K562 (cell line): ENCODE measurements at regions of chr4 and their contacts with region 1.

Region 1: DNA sequence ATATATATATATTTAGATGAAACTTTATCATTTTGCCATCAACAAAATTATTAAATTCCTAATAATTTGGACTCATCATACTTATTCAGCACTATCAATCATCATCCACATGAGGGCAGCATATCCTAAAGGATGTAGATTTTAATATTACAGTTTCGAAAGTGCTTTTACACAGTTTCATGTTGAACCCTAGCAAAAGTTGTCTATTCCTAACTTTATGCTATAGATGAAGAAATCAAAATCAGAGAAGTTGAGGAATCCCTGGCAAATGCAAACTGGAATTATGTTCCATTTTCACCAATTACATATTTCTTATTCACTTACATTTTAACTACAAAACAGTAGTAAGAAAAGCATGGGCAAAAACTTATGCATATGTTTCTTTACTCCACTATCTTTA is 36.6 kb upstream of the UGT2A1 start:
- DNase-seq: peak; percentile 4 to 11 (median 10)
- ATAC-seq: no peak
- H3K4me3 ChIP-seq: no peak overlapping the region
- H3K27ac ChIP-seq: no peak overlapping the region
- H3K4me1 ChIP-seq: no peaks in the 10 kb centered on the region
- H3K27me3 ChIP-seq: no peaks in the 10 kb centered on the region
- CTCF ChIP-seq: peak in 1 of 3 experiments; percentile 43; a peak in 2 of 6 replicates
- EP300 ChIP-seq: no peak
- POLR2A ChIP-seq: no peak
- RAD21 ChIP-seq: peak; percentile 72 to 75

Region 2: DNA sequence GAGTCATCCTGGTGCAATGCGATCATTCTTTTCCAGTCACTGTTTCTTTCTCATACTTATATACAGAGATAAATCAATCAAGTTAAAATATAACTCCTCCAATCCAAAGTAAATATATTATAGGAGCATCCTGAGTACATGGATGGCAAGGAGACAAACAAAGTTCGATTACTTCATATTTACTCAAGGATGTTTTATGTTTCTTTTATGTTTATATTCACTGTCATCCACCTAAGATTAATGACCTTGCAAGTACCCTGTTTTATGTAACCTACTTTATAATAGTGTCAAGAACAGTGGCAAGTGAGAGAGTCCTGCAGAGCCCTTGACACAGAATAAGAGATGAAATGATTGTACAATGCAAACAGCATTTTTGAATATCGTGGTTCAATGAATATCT is 474.9 kb before region 1 on chr4 and contains the start of gene UGT2B11:
- CTCF ChIA-PET with region 1: no interaction called
- POLR2A ChIA-PET with region 1: no interaction called
- in situ Hi-C with region 1: no loop called
- intact Hi-C with region 1: no loop called
- DNase-seq: no peak
- ATAC-seq: no peak
- H3K4me3 ChIP-seq: no peak within 1 kb of the TSS
- H3K27ac ChIP-seq: no peak within 1 kb of the TSS
- H3K4me1 ChIP-seq: no peaks in the 10 kb centered on the region
- H3K27me3 ChIP-seq: no peaks in the 10 kb centered on the region
- CTCF ChIP-seq: no peak
- EP300 ChIP-seq: no peak
- POLR2A ChIP-seq: no peak
- RAD21 ChIP-seq: no peak
- polyA plus RNA-seq, gene UGT2B11: not detected

Region 3: GRCh38 chr4:70559211-70559830 is 869.7 kb after region 1 on chr4:
- CTCF ChIA-PET with region 1: interaction called, 5 read pairs
- POLR2A ChIA-PET with region 1: no interaction called
- in situ Hi-C with region 1: no loop called
- intact Hi-C with region 1: loop called (anchors 2 kb)
- DNase-seq: peak; percentile 44 to 62 (median 52)
- ATAC-seq: peak; percentile 84
- H3K4me3 ChIP-seq: no peak overlapping the region
- H3K27ac ChIP-seq: no peak overlapping the region
- H3K4me1 ChIP-seq: no peaks in the 10 kb centered on the region; a peak in 1 of 5 replicates
- H3K27me3 ChIP-seq: no peaks in the 10 kb centered on the region
- CTCF ChIP-seq: peak; percentile 57 to 75 (median 72)
- EP300 ChIP-seq: no peak
- POLR2A ChIP-seq: no peak
- RAD21 ChIP-seq: peak; percentile 67 to 76